ENCODE measurements at regions of chr12 and their contacts with region 1.

Region 1: DNA sequence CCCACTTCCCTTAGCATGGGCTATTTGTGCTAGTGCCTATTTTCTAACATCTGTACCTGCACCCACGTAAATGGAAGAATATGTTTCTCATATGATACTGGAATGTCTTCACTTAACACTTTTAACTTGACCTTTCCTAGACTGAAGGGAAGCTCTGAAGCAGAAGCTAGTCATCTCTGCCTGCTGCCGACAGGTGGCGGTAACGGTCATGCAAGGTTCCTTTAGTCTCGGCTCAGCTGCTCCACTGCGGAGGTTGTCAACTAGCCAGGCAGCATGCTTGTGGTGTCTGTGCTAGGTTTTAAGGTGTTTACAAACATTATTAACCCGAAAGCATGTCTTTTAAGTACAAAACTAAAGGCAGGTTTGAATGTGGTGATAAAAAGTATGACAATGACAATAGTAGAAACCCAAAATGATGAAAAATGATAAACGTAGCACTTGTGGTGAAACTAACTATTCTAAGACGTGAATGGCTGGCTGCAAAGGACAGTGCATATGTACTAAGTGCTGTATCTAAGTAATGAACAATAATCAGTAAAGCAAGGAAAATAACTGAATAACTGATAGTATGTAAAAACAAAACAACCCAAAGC is 117.2 kb downstream of the GRIN2B start:
- DNase-seq: peak; percentile 50 to 84
- H3K4me3 ChIP-seq: no peak overlapping the region
- H3K27ac ChIP-seq: no peak overlapping the region
- H3K4me1 ChIP-seq: no peaks in the 10 kb centered on the region
- H3K27me3 ChIP-seq: no peaks in the 10 kb centered on the region
- CTCF ChIP-seq: peak; percentile 86 to 99 (median 97)
- EP300 ChIP-seq: no peak
- POLR2A ChIP-seq: no peak
- RAD21 ChIP-seq: peak; percentile 74 to 82

Region 2: DNA sequence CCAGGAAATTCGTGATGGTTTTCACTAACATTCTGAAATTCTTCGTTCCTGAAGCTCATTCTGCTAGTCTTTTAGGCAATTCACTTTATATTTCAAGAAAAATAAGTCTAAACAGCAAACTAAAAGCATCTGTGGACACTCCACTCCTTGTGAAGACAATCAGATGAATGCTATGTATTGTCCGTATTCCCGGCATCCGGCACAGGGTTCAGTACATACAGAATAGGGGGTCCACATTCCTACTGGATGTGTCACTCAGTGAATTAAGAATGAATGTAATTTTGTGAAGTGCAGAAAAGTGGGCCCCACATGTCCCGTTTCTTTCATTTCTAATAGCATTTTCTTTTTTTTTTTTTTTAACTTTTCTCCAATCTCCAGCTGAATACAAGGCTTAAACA is 124.0 kb before region 1 on chr12:
- CTCF ChIA-PET with region 1: interaction called, 14 read pairs
- POLR2A ChIA-PET with region 1: no interaction called
- DNase-seq: no peak
- H3K4me3 ChIP-seq: no peak overlapping the region
- H3K27ac ChIP-seq: no peak overlapping the region
- H3K4me1 ChIP-seq: peaks cover 0 to 4% (median 2%) of the 10 kb centered on the region in 4 experiments; a peak in 3 of 7 replicates
- H3K27me3 ChIP-seq: no peaks in the 10 kb centered on the region; a peak in 2 of 7 replicates
- CTCF ChIP-seq: no peak
- EP300 ChIP-seq: no peak
- POLR2A ChIP-seq: no peak
- RAD21 ChIP-seq: no peak

Region 3: GRCh38 chr12:13843841-13844240 is 20.3 kb before region 1 on chr12:
- CTCF ChIA-PET with region 1: interaction called, 28 read pairs
- POLR2A ChIA-PET with region 1: no interaction called
- DNase-seq: no peak
- H3K4me3 ChIP-seq: no peak overlapping the region
- H3K27ac ChIP-seq: no peak overlapping the region
- H3K4me1 ChIP-seq: no peaks in the 10 kb centered on the region
- H3K27me3 ChIP-seq: no peaks in the 10 kb centered on the region
- CTCF ChIP-seq: no peak
- EP300 ChIP-seq: no peak
- POLR2A ChIP-seq: no peak
- RAD21 ChIP-seq: no peak

Region 4: DNA sequence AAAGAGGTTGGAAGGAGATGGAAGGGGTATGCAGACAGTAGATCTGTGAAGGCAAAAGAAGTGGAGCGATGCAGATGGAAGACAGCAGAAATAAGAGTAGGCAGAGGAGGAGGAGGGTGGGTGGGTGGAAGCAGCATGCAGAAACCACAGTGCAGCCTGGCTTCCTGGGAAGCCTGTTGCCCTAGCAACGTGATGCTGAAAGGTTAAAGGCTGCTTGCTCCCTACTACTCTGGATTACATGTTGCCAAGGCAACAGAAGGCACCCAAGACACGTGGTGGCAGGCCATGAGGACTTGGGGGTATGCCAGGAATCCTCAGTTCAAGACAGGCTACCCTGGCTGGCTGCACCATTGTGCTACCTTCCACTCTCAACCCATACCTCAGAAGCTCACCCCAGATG is 12.3 kb before region 1 on chr12:
- CTCF ChIA-PET with region 1: interaction called, 25 read pairs
- POLR2A ChIA-PET with region 1: no interaction called
- DNase-seq: peak; percentile 41 to 70
- H3K4me3 ChIP-seq: no peak overlapping the region
- H3K27ac ChIP-seq: no peak overlapping the region
- H3K4me1 ChIP-seq: peaks cover 0 to 5% (median 1%) of the 10 kb centered on the region in 4 experiments; a peak in 3 of 7 replicates
- H3K27me3 ChIP-seq: no peaks in the 10 kb centered on the region
- CTCF ChIP-seq: no peak
- EP300 ChIP-seq: 0 out of 3 replicates have a peak, but pooled peaks of 1 of the 2 experiments have one; percentile 9
- POLR2A ChIP-seq: no peak
- RAD21 ChIP-seq: no peak; a peak in 1 of 4 replicates

Region 5: DNA sequence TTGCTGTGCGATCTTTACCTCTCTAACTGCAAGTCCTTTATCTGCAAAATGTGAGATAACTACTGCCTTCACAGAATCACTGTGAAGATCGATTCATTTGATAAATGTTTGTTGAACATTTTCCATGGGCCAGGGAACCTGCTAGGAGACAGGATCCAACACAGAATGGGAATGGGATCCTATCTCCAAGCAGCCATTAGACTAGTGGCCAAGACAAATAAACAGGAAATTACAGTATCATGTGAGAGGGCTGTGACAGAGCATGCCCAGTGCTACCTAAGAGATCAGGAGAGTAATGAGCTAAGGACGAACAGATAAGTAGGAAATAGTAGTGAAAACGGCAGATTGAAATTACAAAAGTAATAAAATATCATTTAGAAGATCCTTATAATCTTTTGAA is 11.6 kb after region 1 on chr12:
- CTCF ChIA-PET with region 1: interaction called, 18 read pairs
- POLR2A ChIA-PET with region 1: no interaction called
- DNase-seq: no peak
- H3K4me3 ChIP-seq: no peak overlapping the region
- H3K27ac ChIP-seq: no peak overlapping the region
- H3K4me1 ChIP-seq: no peaks in the 10 kb centered on the region; a peak in 1 of 7 replicates
- H3K27me3 ChIP-seq: no peaks in the 10 kb centered on the region
- CTCF ChIP-seq: no peak
- EP300 ChIP-seq: no peak
- POLR2A ChIP-seq: no peak
- RAD21 ChIP-seq: no peak

Measured in H1 (cell line).